Endothelial cell of umbilical vein (primary cell): ENCODE measurements at regions of chr2 and their contacts with region 1.

Region 1: DNA sequence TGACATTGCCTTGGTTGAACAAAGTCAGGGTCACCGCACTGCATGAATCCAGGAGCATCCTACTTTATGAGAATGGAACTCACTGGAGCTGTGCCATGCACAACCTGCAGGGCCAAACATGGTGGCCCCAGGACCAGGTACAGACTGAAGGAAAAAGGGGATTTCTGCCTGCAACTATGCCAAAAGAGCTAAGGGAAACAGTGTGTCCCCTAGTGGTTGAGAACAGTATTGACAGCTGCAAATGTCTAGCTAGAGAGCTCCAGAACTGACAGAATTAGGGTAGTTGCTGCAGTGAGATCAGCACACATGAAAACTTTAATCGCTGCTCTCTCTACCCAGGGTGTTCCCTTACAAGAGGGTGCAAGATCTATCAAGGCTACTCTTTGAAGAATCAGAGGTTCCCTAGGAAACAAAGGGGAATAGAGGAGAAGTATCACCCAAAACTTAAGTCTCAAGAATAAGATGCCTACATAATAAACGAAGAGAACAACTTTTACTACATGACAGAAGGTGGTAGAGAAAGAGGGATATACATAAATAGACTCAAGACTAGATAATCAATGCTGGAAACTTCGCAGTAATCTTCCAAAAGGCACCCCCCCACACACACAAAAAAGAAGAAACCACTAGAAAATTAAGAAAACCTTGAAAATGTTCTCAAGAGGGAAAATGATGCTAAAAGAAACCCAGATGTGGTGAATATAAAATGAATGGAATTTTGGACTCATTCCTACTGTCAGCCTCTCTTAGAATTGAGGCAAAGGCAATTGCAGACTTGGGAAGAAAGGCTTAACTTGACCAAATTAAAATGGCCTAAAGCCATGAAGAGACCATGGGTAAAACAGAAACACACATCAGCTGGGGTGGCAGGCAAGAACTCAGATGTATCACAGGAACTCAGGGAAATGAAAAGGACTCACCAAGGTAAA is 43.6 kb upstream of the IHH start:
- DNase-seq: peak; percentile 35
- H3K4me3 ChIP-seq: no peak overlapping the region
- H3K27ac ChIP-seq: no peak overlapping the region
- H3K4me1 ChIP-seq: no peaks in the 10 kb centered on the region
- H3K27me3 ChIP-seq: no peaks in the 10 kb centered on the region
- CTCF ChIP-seq: peak; percentile 84 to 86
- POLR2A ChIP-seq: no peak

Region 2: DNA sequence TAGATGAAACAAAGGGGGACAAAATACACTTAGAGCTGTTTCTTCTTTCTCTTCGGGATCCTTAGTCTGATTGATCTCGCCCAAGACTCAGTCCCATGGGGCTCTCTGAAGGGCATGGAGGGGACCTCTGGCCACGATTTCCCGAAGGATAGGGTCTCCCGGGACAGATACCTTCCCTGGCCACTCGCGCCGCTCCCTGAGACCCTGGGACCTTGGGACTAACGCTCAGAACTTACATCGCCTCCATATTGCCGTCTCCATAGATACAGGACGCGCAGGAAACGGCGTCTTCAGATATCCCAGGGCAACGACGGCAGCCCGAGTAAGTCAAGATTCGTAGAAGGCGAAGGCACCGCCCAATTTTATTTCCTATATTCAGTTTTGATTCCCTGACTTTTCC is 63.1 kb before region 1 on chr2 and contains the start of gene CFAP65:
- CTCF ChIA-PET with region 1: interaction called, 11 read pairs
- POLR2A ChIA-PET with region 1: no interaction called
- dilution Hi-C with region 1: no loop called
- intact Hi-C with region 1: no loop called
- DNase-seq: peak; percentile 40
- H3K4me3 ChIP-seq: peak within 1 kb of the TSS in 1 of 3 experiments; percentile 21
- H3K27ac ChIP-seq: no peak within 1 kb of the TSS
- H3K4me1 ChIP-seq: no peaks in the 10 kb centered on the region
- H3K27me3 ChIP-seq: peaks cover 18 to 22% of the 10 kb centered on the region in 2 experiments
- CTCF ChIP-seq: no peak
- POLR2A ChIP-seq: no peak
- total RNA-seq, gene CFAP65: not detected in 2 replicates

Region 3: GRCh38 chr2:219073413-219074129 is 30.8 kb before region 1 on chr2:
- CTCF ChIA-PET with region 1: interaction called, 68 read pairs
- POLR2A ChIA-PET with region 1: no interaction called
- dilution Hi-C with region 1: no loop called
- intact Hi-C with region 1: loop called (anchors 1 kb)
- DNase-seq: peak; percentile 23
- H3K4me3 ChIP-seq: no peak overlapping the region
- H3K27ac ChIP-seq: no peak overlapping the region
- H3K4me1 ChIP-seq: no peaks in the 10 kb centered on the region
- H3K27me3 ChIP-seq: no peaks in the 10 kb centered on the region
- CTCF ChIP-seq: peak; percentile 60 to 65
- POLR2A ChIP-seq: no peak

Region 4: DNA sequence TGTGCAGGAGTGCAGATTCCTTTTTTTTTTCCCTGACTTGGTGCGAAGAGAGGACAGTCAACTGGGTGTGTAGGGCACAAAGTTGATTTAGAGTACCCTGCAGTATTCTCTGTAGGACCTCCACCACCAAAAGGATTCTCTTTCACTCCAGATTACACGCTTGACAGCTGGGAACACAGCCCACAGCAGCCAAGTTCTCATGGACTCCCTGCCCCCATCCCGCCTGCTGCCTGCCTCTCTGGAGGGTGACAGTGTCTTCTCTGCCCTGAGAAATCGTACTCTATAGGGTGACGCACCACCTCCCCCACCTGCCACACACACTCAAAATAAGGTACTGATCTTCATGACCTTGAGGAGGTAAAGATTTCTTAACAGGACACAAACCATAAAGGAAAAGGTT is 17.0 kb before region 1 on chr2:
- CTCF ChIA-PET with region 1: interaction called, 71 read pairs
- POLR2A ChIA-PET with region 1: no interaction called
- dilution Hi-C with region 1: no loop called
- intact Hi-C with region 1: no loop called
- DNase-seq: no peak
- H3K4me3 ChIP-seq: no peak overlapping the region
- H3K27ac ChIP-seq: no peak overlapping the region
- H3K4me1 ChIP-seq: no peaks in the 10 kb centered on the region
- H3K27me3 ChIP-seq: no peaks in the 10 kb centered on the region
- CTCF ChIP-seq: no peak
- POLR2A ChIP-seq: no peak

Region 5: GRCh38 chr2:219133976-219134375 is 29.6 kb after region 1 on chr2:
- CTCF ChIA-PET with region 1: interaction called, 12 read pairs
- POLR2A ChIA-PET with region 1: interaction called, 7 read pairs
- dilution Hi-C with region 1: no loop called
- intact Hi-C with region 1: no loop called
- DNase-seq: no peak
- H3K4me3 ChIP-seq: no peak overlapping the region
- H3K27ac ChIP-seq: no peak overlapping the region
- H3K4me1 ChIP-seq: no peaks in the 10 kb centered on the region
- H3K27me3 ChIP-seq: no peaks in the 10 kb centered on the region
- CTCF ChIP-seq: no peak
- POLR2A ChIP-seq: no peak

Region 6: GRCh38 chr2:219186754-219187456 is 82.5 kb after region 1 on chr2:
- CTCF ChIA-PET with region 1: no interaction called
- POLR2A ChIA-PET with region 1: no interaction called
- dilution Hi-C with region 1: no loop called
- intact Hi-C with region 1: no loop called
- DNase-seq: no peak
- H3K4me3 ChIP-seq: no peak overlapping the region
- H3K27ac ChIP-seq: no peak overlapping the region
- H3K4me1 ChIP-seq: no peaks in the 10 kb centered on the region
- H3K27me3 ChIP-seq: no peaks in the 10 kb centered on the region
- CTCF ChIP-seq: no peak
- POLR2A ChIP-seq: no peak